ENCODE measurements at regions of chr5 and their contacts with region 1.

Region 1: GRCh38 chr5:157802747-157803146 is 56.2 kb downstream of the CLINT1 start:
- DNase-seq: no peak
- H3K4me3 ChIP-seq: no peak overlapping the region
- CTCF ChIP-seq: no peak

Region 2: DNA sequence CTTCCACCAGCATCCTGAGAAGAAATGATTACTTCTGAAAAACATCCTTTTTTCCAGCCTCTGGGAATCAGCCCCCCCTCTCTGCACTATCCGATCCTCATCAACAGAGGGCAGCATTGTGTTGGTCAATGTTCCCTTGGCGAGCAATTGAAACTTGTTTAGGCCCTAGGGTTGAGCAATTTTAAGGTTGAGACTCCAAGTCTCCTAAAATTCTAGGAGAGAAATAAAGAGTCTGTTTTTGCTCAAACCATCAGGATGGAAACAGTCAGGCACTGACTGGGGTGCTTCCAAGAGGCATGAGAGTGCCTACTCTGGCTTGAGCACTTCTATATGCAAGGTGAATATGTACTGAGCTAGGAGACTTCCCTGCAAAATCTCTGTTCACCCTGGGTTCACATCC is 549.2 kb before region 1 on chr5:
- in situ Hi-C with region 1: no loop called
- DNase-seq: peak; percentile 15
- H3K4me3 ChIP-seq: no peak overlapping the region
- CTCF ChIP-seq: peak; percentile 97

Region 3: GRCh38 chr5:157835041-157835440 is 32.3 kb after region 1 on chr5:
- in situ Hi-C with region 1: no loop called
- DNase-seq: no peak
- H3K4me3 ChIP-seq: no peak overlapping the region
- CTCF ChIP-seq: no peak

Region 4: GRCh38 chr5:157858527-157859226 is 55.9 kb after region 1 on chr5 and contains the start of gene CLINT1:
- in situ Hi-C with region 1: no loop called
- DNase-seq: peak; percentile 46
- H3K4me3 ChIP-seq: peak within 1 kb of the TSS; percentile 97
- CTCF ChIP-seq: no peak

Region 5: DNA sequence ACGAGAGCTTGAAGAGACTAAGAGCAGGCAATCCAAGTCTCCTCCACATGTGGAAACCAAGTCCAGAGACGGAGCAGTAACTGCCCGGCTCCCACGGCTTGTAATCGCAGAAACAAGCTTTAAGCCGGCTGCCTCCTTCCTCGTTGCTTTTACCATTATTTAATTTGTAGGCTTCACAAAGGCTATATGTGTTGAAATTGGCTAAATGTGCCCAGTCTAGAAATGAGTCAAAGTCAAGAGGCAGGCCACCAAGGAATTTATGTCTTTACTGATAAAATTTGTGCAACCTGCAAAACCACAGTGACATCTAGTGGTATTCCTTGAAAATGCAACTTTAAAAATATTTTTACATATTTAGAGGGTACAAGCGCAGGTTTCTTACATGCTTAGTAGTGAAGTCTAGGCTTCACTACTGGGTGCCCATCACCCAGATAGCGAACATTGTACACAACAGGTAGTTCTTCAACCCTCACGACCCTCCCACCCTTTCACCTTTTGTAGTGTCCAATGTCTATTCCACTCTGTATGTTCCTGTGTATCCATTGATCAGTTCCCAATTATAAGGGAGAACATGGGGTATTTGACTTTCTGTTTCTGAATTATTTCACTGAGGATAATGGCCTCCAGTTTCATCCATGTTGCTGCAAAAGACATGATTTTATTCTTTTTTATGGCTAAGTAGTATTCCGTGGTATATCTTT is 1330.4 kb after region 1 on chr5:
- in situ Hi-C with region 1: loop called (anchors 10 kb)
- DNase-seq: peak; percentile 64
- H3K4me3 ChIP-seq: no peak overlapping the region
- CTCF ChIP-seq: peak; percentile 60

Measured in astrocyte of the cerebellum (primary cell).